Lower leg skin (tissue), 4 donors: ENCODE measurements at regions of chr5 and their contacts with region 1.

Region 1: DNA sequence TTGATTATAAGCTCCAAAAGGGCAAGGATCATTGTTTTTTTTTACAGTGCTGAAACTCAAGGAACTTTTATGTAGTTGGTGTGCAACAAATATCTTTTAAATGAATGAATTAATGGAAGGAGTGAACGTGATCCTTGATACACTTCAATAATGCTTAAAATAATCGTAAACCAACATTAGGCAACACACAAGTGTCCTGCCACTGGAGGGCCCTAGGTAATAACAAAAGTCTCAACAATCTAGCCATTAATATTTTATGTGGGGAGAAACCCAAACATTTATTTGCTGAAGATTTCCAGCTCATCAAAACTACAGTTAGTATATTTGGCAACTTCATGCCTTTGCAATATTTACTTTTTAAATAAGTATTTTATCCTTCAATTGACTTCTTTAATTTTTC is 309.0 kb upstream of the FBXL7 start:
- DNase-seq: no peak
- H3K4me3 ChIP-seq: no peak overlapping the region
- CTCF ChIP-seq: no peak
- POLR2A ChIP-seq: no peak

Region 2: GRCh38 chr5:15160091-15160490 is 30.9 kb before region 1 on chr5:
- intact Hi-C with region 1: no loop called
- DNase-seq: no peak
- H3K4me3 ChIP-seq: no peak overlapping the region
- CTCF ChIP-seq: no peak
- POLR2A ChIP-seq: no peak

Region 3: GRCh38 chr5:16477541-16477940 is 1286.5 kb after region 1 on chr5:
- intact Hi-C with region 1: loop called (anchors 5 kb)
- DNase-seq: no peak
- H3K4me3 ChIP-seq: no peak overlapping the region
- CTCF ChIP-seq: no peak
- POLR2A ChIP-seq: no peak